Astrocyte of the cerebellum (primary cell): ENCODE measurements at regions of chr4 and their contacts with region 1.

Region 1: GRCh38 chr4:180898305-180898704 is 1344.9 kb upstream of the TENM3 start:
- DNase-seq: no peak
- H3K4me3 ChIP-seq: no peak overlapping the region
- CTCF ChIP-seq: no peak

Region 2: GRCh38 chr4:180811556-180811955 is 86.7 kb before region 1 on chr4:
- in situ Hi-C with region 1: loop called (anchors 10 kb)
- DNase-seq: no peak
- H3K4me3 ChIP-seq: no peak overlapping the region
- CTCF ChIP-seq: no peak